Cardiac septum (tissue), 1 donor: ENCODE measurements at regions of chr11 and their contacts with region 1.

Region 1: GRCh38 chr11:61392981-61393595 is 701 bp downstream of the TMEM216 start:
- DNase-seq: no peak

Region 2: GRCh38 chr11:61361686-61362541 is 31.2 kb before region 1 on chr11 and contains the starts of genes CYB561A3 and TMEM138:
- intact Hi-C with region 1: loop called (anchors 1 kb)
- DNase-seq: peak; percentile 96
- total RNA-seq, gene CYB561A3: 11.2 TPM
- total RNA-seq, gene TMEM138: 17.9 TPM

Region 3: DNA sequence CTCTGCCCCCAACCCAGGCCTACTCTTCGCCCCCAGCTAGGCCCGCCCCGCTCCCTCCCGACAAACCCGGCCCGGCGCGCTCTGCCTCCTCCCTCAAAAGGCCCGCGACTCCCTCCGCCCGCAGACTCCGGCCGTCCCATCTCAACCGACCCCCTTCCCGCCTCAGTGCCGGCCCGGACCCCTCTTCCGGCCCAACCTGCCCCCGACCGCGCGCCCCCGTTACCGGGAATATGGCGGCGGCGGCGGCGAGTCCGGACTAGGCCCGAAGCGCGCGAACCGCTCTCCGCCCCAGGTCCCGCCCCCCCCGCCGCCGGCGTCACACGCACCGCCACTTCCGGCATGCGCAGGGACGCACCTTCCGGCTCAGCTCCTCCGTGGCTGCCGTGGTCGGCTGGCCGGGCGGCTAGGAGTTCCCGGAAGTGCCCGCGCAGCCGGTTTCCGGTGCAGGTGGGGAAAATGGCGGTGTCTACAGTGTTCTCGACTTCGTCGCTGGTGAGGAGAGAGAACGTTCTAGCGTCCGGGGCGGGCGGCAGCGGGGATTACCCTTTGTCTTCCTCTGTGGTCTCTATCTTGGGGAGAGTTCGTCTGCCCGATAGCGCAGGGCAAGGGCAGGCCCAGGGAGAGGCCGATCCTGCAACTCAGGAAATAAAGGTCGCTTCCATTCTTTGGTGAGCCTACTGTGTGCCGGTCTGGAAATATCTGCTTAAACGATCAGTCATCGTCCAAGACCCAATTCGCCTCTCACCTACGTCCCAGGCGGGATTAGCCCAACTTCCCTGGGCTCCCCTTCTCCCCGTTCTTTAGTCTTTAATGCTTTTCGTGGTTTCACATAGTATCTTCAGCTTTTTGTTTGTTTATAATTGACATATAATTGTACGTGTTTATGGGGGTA is 36.8 kb after region 1 on chr11 and contains the starts of genes CPSF7 and SDHAF2:
- intact Hi-C with region 1: loop called (anchors 1 kb)
- DNase-seq: peak; percentile 99
- total RNA-seq, gene CPSF7: 40.1 TPM
- total RNA-seq, gene SDHAF2: 27.9 TPM

Region 4: GRCh38 chr11:61477727-61478148 is 84.7 kb after region 1 on chr11:
- intact Hi-C with region 1: no loop called
- DNase-seq: no peak